T-cell (primary cell): ENCODE measurements at regions of chr4 and their contacts with region 1.

Region 1: GRCh38 chr4:16120720-16121119 is 36.9 kb upstream of the PROM1 start:
- DNase-seq: no peak
- ATAC-seq: no peak
- H3K4me3 ChIP-seq: no peak overlapping the region
- H3K4me3 Mint-ChIP-seq: no peak overlapping the region
- H3K27ac ChIP-seq: no peak overlapping the region
- H3K27ac Mint-ChIP-seq: no peak overlapping the region
- H3K4me1 ChIP-seq: peaks cover 27 to 29% of the 10 kb centered on the region in 2 experiments
- H3K4me1 Mint-ChIP-seq: peaks cover 20 to 35% (median 21%) of the 10 kb centered on the region in 3 donors
- H3K27me3 ChIP-seq: peaks cover 0 to 22% of the 10 kb centered on the region in 2 experiments
- H3K27me3 Mint-ChIP-seq: peaks cover 0 to 7% of the 10 kb centered on the region in 2 donors

Region 2: GRCh38 chr4:16337936-16338335 is 217.2 kb after region 1 on chr4:
- CTCF ChIA-PET with region 1: no interaction called
- POLR2A ChIA-PET with region 1: interaction called in 1 of 2 experiments, 16 read pairs
- DNase-seq: no peak
- ATAC-seq: no peak
- H3K4me3 ChIP-seq: no peak overlapping the region
- H3K4me3 Mint-ChIP-seq: no peak overlapping the region
- H3K27ac ChIP-seq: no peak overlapping the region
- H3K27ac Mint-ChIP-seq: no peak overlapping the region
- H3K4me1 ChIP-seq: no peaks in the 10 kb centered on the region
- H3K4me1 Mint-ChIP-seq: no peaks in the 10 kb centered on the region
- H3K27me3 ChIP-seq: no peaks in the 10 kb centered on the region
- H3K27me3 Mint-ChIP-seq: peaks cover 0 to 24% of the 10 kb centered on the region in 2 donors